ENCODE measurements at regions of chr18 and their contacts with region 1.

Region 1: DNA sequence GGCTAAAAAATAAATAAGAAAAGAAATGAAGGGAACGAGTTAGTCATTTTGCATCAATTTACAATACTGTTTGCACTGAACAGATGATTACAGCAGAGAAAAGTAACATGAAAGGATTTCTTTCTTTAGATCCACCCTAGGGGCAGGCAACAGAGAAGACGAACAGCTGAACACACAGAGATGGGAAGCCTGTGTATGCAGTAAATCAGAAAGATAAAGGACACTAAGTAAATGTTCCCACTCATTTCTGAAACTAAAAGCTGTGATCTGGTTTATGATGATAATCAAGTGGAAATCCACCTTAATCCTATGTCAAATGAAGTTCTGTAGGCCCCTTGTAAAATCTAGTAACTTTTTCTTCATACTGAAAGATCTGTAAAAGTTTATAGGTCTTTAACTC is 54.2 kb downstream of the AKAIN1 start:
- DNase-seq: peak; percentile 68 to 71
- H3K4me3 ChIP-seq: no peak overlapping the region
- H3K4me3 Mint-ChIP-seq: no peak overlapping the region
- H3K27ac Mint-ChIP-seq: no peak overlapping the region
- H3K4me1 ChIP-seq: peaks cover 22% of the 10 kb centered on the region
- H3K4me1 Mint-ChIP-seq: no peaks in the 10 kb centered on the region
- H3K27me3 ChIP-seq: no peaks in the 10 kb centered on the region
- H3K27me3 Mint-ChIP-seq: no peaks in the 10 kb centered on the region
- CTCF ChIP-seq: no peak

Region 2: DNA sequence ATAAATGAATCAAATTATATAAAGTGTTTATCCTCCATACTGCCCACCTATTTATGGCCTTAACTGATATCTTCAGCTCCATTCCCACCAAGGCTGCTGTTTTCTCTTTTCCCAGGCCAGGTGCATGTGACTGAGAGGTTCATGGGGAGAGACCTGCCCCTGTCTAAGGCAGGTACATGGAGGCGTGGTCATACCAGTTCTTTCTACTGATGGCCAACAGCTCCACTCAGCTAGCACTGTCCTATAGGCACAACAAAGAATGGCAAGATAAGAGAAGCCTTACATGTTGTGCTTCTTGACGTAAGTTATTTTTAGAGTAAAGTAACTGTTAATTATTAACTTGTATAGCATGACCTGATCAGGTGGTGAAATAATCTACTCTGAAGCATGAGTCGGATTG is 37.4 kb after region 1 on chr18:
- CTCF ChIA-PET with region 1: no interaction called
- POLR2A ChIA-PET with region 1: no interaction called
- intact Hi-C with region 1: loop called (anchors 2 kb)
- DNase-seq: peak; percentile 66 to 69
- H3K4me3 ChIP-seq: no peak overlapping the region
- H3K4me3 Mint-ChIP-seq: no peak overlapping the region
- H3K27ac Mint-ChIP-seq: no peak overlapping the region
- H3K4me1 ChIP-seq: peaks cover 10% of the 10 kb centered on the region
- H3K4me1 Mint-ChIP-seq: peaks cover 12% of the 10 kb centered on the region
- H3K27me3 ChIP-seq: no peaks in the 10 kb centered on the region
- H3K27me3 Mint-ChIP-seq: no peaks in the 10 kb centered on the region
- CTCF ChIP-seq: no peak

Region 3: GRCh38 chr18:5295981-5296705 is 153.3 kb after region 1 on chr18:
- CTCF ChIA-PET with region 1: no interaction called
- POLR2A ChIA-PET with region 1: no interaction called
- intact Hi-C with region 1: loop called (anchors 1 kb)
- DNase-seq: peak; percentile 94 to 95
- H3K4me3 ChIP-seq: peak overlapping the region; percentile 89
- H3K4me3 Mint-ChIP-seq: peak overlapping the region; percentile 75
- H3K27ac Mint-ChIP-seq: peak overlapping the region; percentile 72
- H3K4me1 ChIP-seq: 0 out of 2 replicates have a peak, but pooled peaks cover 4% of the 10 kb centered on the region
- H3K4me1 Mint-ChIP-seq: peaks cover 9% of the 10 kb centered on the region
- H3K27me3 ChIP-seq: no peaks in the 10 kb centered on the region
- H3K27me3 Mint-ChIP-seq: no peaks in the 10 kb centered on the region
- CTCF ChIP-seq: no peak

Region 4: DNA sequence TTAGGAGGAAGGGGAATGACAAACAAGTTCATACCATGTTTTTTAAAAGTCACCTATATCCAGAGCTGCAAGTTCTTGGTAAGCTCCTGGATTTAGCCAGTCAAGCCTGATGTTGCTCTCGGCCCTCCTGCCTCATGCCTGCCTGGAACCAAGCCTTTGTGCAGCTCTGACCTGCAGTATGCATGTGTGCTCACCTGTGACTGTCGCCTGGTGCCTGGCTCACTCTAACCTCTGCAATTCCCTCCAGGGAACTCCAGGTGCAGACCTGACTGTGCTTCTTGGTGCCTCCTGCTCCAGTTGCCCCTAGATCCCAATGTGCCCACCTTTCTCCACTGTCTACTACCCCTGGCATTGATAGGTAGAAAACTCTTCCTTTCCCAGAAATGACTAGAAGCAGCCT is 237.7 kb after region 1 on chr18:
- CTCF ChIA-PET with region 1: no interaction called
- POLR2A ChIA-PET with region 1: no interaction called
- intact Hi-C with region 1: no loop called
- DNase-seq: no peak
- H3K4me3 ChIP-seq: no peak overlapping the region
- H3K4me3 Mint-ChIP-seq: no peak overlapping the region
- H3K27ac Mint-ChIP-seq: no peak overlapping the region
- H3K4me1 ChIP-seq: no peaks in the 10 kb centered on the region
- H3K4me1 Mint-ChIP-seq: no peaks in the 10 kb centered on the region
- H3K27me3 ChIP-seq: no peaks in the 10 kb centered on the region
- H3K27me3 Mint-ChIP-seq: peaks cover 7% of the 10 kb centered on the region
- CTCF ChIP-seq: no peak